Activated B cell treated with CpG ODN at 0.5 μM for 24 hours (primary cell): ENCODE measurements at regions of chr10 and their contacts with region 1.

Region 1: DNA sequence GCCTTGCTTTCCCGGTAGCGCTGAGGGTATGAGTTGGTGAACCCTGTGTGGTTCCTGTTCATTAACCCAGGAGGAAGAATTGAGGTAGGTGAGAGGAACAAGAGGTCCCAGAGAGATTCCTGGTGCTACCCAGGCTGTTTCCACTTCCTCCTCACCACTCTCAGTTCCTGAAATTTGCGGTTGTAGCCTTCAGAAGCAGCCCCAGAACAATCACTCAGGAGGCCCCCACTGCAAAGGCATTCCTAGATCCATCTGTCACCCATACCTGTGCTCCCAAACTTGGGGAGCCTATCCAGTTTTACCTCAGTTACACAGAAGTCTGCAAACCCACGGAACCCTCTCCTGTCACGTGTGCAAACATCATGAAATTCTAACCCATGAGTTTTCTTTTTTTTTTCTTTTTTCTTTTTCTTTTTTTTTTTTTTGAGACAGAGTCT is 9.0 kb upstream of the PIP4K2A start:
- DNase-seq: peak; percentile 50
- ATAC-seq: peak; percentile 91
- H3K4me3 Mint-ChIP-seq: peak overlapping the region; percentile 80
- H3K27ac Mint-ChIP-seq: peak overlapping the region; percentile 83
- H3K4me1 Mint-ChIP-seq: peaks cover 57% of the 10 kb centered on the region
- H3K27me3 Mint-ChIP-seq: no peaks in the 10 kb centered on the region
- CTCF ChIP-seq: no peak

Region 2: DNA sequence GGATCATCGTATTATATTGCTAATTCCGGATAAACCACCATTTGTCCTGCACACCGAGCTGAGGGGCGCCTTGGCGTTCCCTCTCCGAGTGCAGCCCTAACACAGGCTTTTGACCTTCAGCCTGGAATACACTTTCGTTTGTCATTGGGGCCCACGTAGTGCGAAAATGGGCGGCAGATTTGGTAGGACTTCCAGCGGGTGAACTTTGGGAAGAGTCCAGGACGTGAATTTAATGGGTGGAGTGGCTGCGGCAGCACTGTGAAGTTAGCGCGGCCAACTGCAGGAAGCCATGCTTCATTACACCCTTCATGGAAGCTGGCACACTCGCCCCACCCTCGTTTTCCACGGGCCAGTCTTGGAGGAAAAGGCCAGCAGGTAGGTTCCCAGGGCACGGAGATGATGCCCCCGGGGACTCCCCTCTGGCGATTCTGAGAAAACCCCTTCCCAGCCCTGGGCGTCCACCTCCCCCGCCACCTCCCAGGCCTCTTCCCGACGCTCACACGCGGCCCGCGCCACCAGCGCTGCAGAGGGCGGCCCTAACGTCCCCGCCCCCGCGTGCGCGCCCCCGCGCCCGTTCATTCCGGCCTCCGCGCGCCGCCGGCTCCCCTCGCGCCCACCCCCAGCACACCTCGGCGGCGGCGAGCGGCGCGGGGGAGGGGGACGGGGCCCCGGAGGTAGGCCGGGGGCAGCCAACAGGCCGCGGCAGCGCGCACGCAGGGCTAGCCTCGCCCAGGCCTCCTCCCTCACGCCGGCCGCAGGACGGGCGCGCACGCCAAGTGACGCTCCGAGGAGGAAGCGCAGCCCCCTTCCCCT is 1189.7 kb before region 1 on chr10 and contains the start of gene MLLT10:
- CTCF ChIA-PET with region 1: no interaction called
- POLR2A ChIA-PET with region 1: no interaction called
- intact Hi-C with region 1: loop called (anchors 5 kb)
- DNase-seq: peak; percentile 94
- ATAC-seq: peak; percentile 88
- H3K4me3 Mint-ChIP-seq: peak within 1 kb of the TSS; percentile 90
- H3K27ac Mint-ChIP-seq: peak within 1 kb of the TSS; percentile 92
- H3K4me1 Mint-ChIP-seq: peaks cover 18% of the 10 kb centered on the region
- H3K27me3 Mint-ChIP-seq: peaks cover 2% of the 10 kb centered on the region
- CTCF ChIP-seq: no peak
- total RNA-seq, gene MLLT10: 40.6 and 48.7 TPM in 2 replicates

Region 3: DNA sequence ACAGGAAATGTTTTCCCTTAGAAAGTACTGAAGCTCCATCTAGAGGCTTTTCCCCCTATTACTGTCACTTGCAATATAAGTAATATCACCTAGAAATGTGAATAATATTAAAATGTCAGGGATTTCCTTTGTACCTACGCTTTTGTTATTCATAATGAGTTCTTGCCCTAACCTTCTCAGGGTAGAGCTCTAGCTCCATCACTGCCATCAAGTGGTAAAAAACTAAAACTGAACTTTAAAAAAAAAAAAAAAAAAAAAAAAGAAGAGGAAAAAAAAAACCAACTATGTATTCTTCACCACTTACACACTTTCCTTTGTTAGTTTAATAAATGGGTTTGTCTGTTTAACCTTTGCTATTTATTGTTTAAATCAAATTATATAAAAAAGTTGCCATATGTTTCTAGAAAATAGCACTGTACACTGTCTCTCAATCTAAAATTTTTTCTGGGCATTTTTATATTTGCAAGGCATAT is 769.7 kb before region 1 on chr10:
- CTCF ChIA-PET with region 1: no interaction called
- POLR2A ChIA-PET with region 1: no interaction called
- intact Hi-C with region 1: no loop called
- DNase-seq: no peak
- ATAC-seq: peak; percentile 42
- H3K4me3 Mint-ChIP-seq: no peak overlapping the region
- H3K27ac Mint-ChIP-seq: no peak overlapping the region
- H3K4me1 Mint-ChIP-seq: peaks cover 9% of the 10 kb centered on the region
- H3K27me3 Mint-ChIP-seq: no peaks in the 10 kb centered on the region
- CTCF ChIP-seq: no peak

Region 4: GRCh38 chr10:22316285-22317120 is 406.9 kb before region 1 on chr10 and contains the start of gene COMMD3:
- CTCF ChIA-PET with region 1: no interaction called
- POLR2A ChIA-PET with region 1: no interaction called
- intact Hi-C with region 1: loop called (anchors 5 kb)
- DNase-seq: peak; percentile 86
- ATAC-seq: peak; percentile 65
- H3K4me3 Mint-ChIP-seq: peak within 1 kb of the TSS; percentile 97
- H3K27ac Mint-ChIP-seq: peak within 1 kb of the TSS; percentile 98
- H3K4me1 Mint-ChIP-seq: peaks cover 40% of the 10 kb centered on the region
- H3K27me3 Mint-ChIP-seq: no peaks in the 10 kb centered on the region
- CTCF ChIP-seq: no peak
- total RNA-seq, gene COMMD3: 68.2 and 72.8 TPM in 2 replicates

Region 5: DNA sequence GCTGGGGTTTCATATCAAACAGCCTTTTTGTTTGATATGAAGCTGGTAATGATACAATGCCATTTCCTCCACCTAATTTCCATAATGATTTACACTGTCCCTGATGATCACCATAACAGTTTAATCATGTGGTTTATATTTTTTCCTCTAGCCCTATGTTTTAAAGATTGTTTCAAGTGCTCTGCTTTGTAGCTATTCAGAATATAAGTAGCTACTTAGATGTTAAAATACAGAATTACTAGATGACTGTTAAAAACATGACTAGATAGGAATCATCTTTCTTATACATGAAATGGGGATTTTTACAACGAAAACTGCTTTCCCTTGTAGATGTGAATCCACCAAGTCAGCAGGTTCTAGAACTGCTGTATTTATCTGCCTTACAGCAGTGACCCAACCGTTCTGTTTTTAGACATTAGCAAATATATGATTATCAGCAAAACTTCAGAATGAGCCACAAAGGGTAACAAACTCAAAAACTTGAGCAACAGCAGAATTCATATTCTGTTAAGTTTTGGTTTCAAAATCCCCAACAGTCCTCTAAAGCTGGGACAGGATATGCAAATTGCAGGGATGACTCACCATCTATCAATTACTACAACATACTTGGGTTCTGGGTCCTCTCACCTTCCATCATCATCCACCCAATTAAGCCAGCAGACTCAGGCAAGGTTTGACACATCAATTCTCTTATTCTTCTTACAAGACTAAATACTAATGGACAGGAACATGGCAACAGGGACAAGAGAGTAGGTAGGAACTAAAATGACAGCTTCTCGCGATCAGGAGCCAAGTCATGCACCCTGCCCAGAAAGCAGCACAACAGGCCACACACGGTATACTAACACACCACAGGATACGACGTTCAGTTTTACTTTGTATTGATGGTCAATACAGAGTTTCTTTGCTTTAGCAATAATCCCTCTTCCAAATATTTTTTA is 92.9 kb before region 1 on chr10:
- CTCF ChIA-PET with region 1: no interaction called
- POLR2A ChIA-PET with region 1: interaction called, 6 read pairs
- intact Hi-C with region 1: loop called (anchors 1 kb)
- DNase-seq: no peak
- ATAC-seq: peak; percentile 85
- H3K4me3 Mint-ChIP-seq: peak overlapping the region; percentile 75
- H3K27ac Mint-ChIP-seq: peak overlapping the region; percentile 95
- H3K4me1 Mint-ChIP-seq: peaks cover 96% of the 10 kb centered on the region
- H3K27me3 Mint-ChIP-seq: no peaks in the 10 kb centered on the region
- CTCF ChIP-seq: no peak

Region 6: GRCh38 chr10:22704471-22704911 is 18.9 kb before region 1 on chr10:
- CTCF ChIA-PET with region 1: interaction called, 4 read pairs
- POLR2A ChIA-PET with region 1: interaction called, 9 read pairs
- intact Hi-C with region 1: loop called (anchors 1 kb)
- DNase-seq: no peak
- ATAC-seq: peak; percentile 74
- H3K4me3 Mint-ChIP-seq: peak overlapping the region; percentile 49
- H3K27ac Mint-ChIP-seq: peak overlapping the region; percentile 79
- H3K4me1 Mint-ChIP-seq: peaks cover 92% of the 10 kb centered on the region
- H3K27me3 Mint-ChIP-seq: no peaks in the 10 kb centered on the region
- CTCF ChIP-seq: no peak

Region 7: DNA sequence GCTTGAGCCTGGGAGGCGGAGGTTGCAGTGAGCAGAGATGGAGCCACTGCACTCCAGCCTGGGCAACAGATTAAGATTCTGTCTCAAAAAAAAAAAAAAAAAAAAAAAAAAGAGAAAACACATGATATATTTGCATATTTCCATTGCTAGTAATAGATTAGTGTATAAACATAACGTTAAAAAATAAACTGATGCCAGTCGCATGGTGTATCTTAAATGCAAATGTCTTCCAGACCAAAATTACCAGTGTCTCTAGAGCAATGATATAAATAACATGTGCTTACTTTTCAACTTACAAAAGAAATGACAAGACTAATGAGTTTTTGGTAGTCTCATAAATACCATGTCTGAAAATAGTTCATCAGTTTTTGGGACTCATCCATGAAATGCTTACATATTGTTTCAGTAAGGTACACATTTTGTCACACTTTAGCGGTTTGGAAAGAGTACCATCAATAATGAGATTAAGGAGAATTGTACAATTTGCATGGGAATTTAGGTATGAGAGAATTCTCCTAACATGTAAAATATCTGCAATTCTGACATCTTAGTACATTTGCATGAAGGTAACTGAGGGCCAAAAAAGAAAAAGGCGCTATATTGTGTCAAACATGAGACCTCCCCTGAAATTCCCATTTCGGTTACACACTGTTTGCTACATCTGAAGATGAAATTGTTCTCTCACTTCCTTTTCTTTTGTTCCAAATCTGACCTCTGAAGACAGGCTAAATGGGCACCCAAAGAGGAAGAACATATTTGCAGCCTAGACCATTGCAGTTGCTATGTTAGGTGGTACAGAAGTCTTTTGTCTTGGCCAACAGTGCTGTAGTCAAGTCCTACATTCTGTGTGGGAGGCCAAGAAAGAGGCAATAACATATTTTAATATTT is 42.5 kb after region 1 on chr10:
- CTCF ChIA-PET with region 1: no interaction called
- POLR2A ChIA-PET with region 1: no interaction called
- intact Hi-C with region 1: loop called (anchors 1 kb)
- DNase-seq: no peak
- ATAC-seq: peak; percentile 68
- H3K4me3 Mint-ChIP-seq: peak overlapping the region; percentile 51
- H3K27ac Mint-ChIP-seq: peak overlapping the region; percentile 61
- H3K4me1 Mint-ChIP-seq: peaks cover 48% of the 10 kb centered on the region
- H3K27me3 Mint-ChIP-seq: no peaks in the 10 kb centered on the region
- CTCF ChIP-seq: no peak